Activated CD4-positive, alpha-beta T cell treated with anti-CD3 and anti-CD28 coated beads for 36 hours (primary cell): ENCODE measurements at regions of chr19 and their contacts with region 1.

Region 1: GRCh38 chr19:1812469-1813196 is 557 bp upstream of the ATP8B3 start:
- DNase-seq: peak; percentile 94
- ATAC-seq: peak; percentile 90
- H3K4me3 Mint-ChIP-seq: peak overlapping the region; percentile 77
- H3K27ac Mint-ChIP-seq: peak overlapping the region; percentile 90
- H3K4me1 Mint-ChIP-seq: peaks cover 14% of the 10 kb centered on the region
- H3K27me3 Mint-ChIP-seq: no peaks in the 10 kb centered on the region

Region 2: DNA sequence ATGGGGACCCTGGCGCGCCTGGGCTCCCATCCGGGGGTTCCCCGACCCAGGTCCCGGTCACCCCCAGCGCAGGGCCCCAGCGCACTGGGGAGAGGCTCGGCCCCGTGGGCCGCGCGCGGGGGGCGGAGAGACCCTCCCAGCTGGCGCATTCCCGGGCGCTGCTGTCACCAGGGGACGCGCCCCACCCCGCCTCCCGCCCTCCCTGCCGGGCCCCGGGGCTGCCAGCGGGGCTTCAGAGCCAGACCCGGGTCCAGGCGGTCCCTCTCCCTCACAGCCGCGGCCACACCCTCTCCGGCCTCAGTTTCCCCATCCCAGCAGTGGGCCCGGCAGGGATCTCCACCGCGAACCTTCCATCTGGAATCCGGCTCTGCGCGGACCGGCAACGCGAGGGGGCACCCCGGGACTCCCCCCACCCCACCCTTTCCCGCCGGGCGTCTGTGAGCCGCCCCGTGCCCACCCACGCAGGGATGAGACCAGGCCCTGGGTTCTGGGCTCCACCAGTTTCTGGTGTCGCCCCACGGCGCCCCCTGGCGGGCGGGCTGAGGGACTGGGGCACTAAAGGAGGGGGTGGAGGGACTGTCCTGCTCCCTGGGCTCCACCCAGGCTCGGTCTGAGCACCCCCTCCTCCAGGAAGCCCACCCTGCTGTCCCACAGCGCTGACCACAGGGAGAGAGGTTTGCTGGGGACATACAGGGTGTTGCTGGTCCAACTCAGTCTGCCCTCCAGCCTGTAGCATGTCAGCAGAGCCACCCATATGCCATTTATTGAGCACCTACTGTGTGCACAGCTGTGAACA is 298.9 kb before region 1 on chr19:
- CTCF ChIA-PET with region 1: no interaction called
- POLR2A ChIA-PET with region 1: no interaction called
- intact Hi-C with region 1: loop called in 1 of 2 experiments (anchors 1 kb)
- DNase-seq: peak; percentile 88
- ATAC-seq: peak; percentile 60
- H3K4me3 Mint-ChIP-seq: no peak overlapping the region
- H3K27ac Mint-ChIP-seq: no peak overlapping the region
- H3K4me1 Mint-ChIP-seq: peaks cover 7% of the 10 kb centered on the region
- H3K27me3 Mint-ChIP-seq: no peaks in the 10 kb centered on the region

Region 3: DNA sequence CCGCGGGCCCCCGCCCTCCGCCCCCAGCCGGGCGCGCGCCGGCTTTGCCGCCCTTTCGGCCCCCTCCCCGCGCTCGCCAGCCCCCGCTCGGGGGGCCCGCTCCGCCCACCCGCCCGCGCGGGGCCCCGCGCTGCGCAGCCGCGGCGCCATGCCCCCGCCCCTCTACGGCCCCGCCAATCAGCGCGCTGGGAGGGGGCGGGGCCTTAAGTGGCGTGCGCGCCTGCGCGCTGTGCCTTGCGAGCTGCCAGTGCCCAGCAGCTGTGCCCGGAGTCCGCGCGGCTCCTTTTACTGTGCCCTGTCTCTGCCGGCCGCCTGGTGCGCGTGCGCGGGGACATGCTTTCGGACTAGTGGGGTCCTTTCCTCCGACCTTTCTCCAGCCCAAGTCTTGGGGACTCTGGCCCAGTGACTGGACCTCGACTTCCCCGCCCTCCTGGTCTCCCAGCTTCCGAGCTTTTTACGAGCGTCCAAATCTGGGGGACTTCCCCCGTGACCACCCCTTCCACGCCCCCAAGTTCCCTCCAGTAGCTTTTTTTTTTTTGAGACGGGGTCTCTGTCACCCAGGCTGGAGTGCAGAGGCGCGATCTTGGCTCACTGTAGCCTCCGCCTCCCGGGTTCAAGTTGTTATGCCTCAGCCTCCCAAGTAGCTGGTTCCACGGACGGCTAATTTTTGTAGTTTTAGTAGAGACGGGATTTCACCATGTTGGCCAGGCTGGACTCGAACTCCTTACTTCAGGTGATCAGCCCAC is 219.7 kb before region 1 on chr19 and contains the start of gene MBD3:
- CTCF ChIA-PET with region 1: no interaction called
- POLR2A ChIA-PET with region 1: no interaction called
- intact Hi-C with region 1: loop called in 1 of 2 experiments (anchors 1 kb)
- DNase-seq: peak; percentile 93
- ATAC-seq: peak; percentile 85
- H3K4me3 Mint-ChIP-seq: peak within 1 kb of the TSS; percentile 94
- H3K27ac Mint-ChIP-seq: peak within 1 kb of the TSS; percentile 93
- H3K4me1 Mint-ChIP-seq: peaks cover 20% of the 10 kb centered on the region
- H3K27me3 Mint-ChIP-seq: no peaks in the 10 kb centered on the region
- total RNA-seq, gene MBD3: 68.9 to 87.5 TPM

Region 4: GRCh38 chr19:1652471-1653299 is 159.9 kb before region 1 on chr19 and contains the start of gene TCF3:
- CTCF ChIA-PET with region 1: no interaction called
- POLR2A ChIA-PET with region 1: no interaction called
- intact Hi-C with region 1: loop called in 1 of 2 experiments (anchors 1 kb)
- DNase-seq: peak; percentile 99
- ATAC-seq: peak; percentile 94
- H3K4me3 Mint-ChIP-seq: peak within 1 kb of the TSS; percentile 88
- H3K27ac Mint-ChIP-seq: peak within 1 kb of the TSS; percentile 91
- H3K4me1 Mint-ChIP-seq: peaks cover 32% of the 10 kb centered on the region
- H3K27me3 Mint-ChIP-seq: no peaks in the 10 kb centered on the region
- total RNA-seq, gene TCF3: 115 to 133 TPM

Region 5: DNA sequence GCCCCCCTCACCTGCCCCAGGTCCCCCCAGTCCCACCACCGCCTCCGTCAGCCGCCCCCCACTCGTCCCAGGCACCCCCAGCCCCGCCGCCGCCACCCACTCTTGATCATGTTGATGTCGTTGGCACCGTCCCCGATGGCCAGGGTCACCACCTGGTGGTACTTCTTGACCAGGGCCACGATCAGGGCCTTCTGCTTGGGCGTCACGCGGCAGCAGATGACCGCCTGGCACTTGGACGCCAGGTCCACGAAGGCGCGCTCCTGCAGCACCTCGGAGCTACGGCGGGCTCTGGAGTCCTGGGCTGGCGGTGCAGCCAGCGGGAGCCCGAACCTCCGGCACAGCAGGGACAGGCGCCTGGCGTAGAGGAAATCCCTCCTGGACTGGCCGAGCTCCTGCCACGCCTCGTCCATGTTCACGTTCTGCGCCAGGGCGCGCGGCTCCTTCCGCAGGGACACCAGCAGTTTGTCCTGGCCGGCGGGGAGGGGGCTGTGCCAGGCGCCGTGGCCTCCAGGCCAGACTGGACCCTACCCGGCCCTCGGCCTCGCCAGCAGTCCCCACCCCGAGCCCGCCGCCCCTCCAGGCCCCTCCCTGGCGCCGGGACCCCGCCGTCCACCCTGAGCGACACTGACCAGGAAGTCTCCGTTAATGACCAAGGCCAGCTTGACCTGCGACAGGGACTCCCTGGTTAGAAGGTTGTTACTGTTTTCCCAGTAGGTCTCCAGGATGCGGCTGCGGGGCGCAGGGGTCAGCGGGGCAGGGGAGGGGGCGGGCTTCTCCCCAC is 23.2 kb before region 1 on chr19:
- CTCF ChIA-PET with region 1: no interaction called
- POLR2A ChIA-PET with region 1: no interaction called
- intact Hi-C with region 1: loop called in 1 of 2 experiments (anchors 1 kb)
- DNase-seq: no peak
- ATAC-seq: no peak
- H3K4me3 Mint-ChIP-seq: no peak overlapping the region
- H3K27ac Mint-ChIP-seq: no peak overlapping the region
- H3K4me1 Mint-ChIP-seq: peaks cover 3% of the 10 kb centered on the region
- H3K27me3 Mint-ChIP-seq: peaks cover 12% of the 10 kb centered on the region

Region 6: GRCh38 chr19:1855040-1855827 is 42.6 kb after region 1 on chr19:
- CTCF ChIA-PET with region 1: no interaction called
- POLR2A ChIA-PET with region 1: no interaction called
- intact Hi-C with region 1: loop called in 1 of 2 experiments (anchors 1 kb)
- DNase-seq: peak; percentile 95
- ATAC-seq: peak; percentile 82
- H3K4me3 Mint-ChIP-seq: peak overlapping the region; percentile 78
- H3K27ac Mint-ChIP-seq: peak overlapping the region; percentile 86
- H3K4me1 Mint-ChIP-seq: peaks cover 64% of the 10 kb centered on the region
- H3K27me3 Mint-ChIP-seq: no peaks in the 10 kb centered on the region

Region 7: GRCh38 chr19:3275583-3276340 is 1463.1 kb after region 1 on chr19:
- CTCF ChIA-PET with region 1: no interaction called
- POLR2A ChIA-PET with region 1: no interaction called
- intact Hi-C with region 1: loop called in 1 of 2 experiments (anchors 5 kb)
- DNase-seq: peak; percentile 99
- ATAC-seq: peak; percentile 83
- H3K4me3 Mint-ChIP-seq: peak overlapping the region; percentile 73
- H3K27ac Mint-ChIP-seq: peak overlapping the region; percentile 80
- H3K4me1 Mint-ChIP-seq: peaks cover 8% of the 10 kb centered on the region
- H3K27me3 Mint-ChIP-seq: peaks cover 9% of the 10 kb centered on the region